ENCODE measurements at regions of chr2 and their contacts with region 1.

Region 1: DNA sequence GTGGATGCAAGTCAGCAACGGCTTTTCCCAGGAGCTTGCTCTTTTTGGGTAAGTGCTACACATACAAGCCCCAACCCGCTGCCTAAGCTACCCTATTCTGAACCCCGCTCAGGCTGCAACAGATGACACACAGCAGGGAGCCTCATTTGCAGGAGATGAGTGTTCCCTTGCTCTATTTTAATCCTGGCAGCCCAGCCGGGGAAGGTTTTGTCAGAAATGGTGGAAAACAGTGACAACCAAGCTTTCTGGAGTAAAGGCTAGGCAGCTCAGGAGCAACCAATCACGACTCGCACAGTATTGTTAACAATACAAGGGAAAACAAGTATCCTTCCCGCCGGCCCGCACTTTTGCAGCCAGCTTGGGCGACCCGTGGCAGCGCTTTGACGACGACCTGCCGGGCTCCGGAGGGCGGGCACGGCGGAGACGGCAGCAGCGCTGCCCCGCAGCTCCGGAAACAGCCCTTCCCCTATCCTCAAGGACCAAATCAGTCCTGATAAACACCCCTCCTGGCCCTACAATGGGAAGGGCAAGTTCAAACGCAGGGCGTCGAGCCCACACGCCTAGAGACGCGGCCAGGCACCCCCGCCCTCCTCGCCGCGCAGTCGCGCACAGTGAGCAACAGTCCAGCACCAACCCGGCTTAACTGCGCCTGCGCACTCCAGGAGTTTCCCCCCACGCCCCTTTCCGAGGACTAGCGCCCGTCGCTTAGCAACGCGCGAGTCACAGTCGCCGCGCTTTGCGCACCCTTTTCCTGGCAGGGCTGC is 74.3 kb upstream of the TSPYL6 start:
- DNase-seq: peak; percentile 95 to 99 (median 97)
- ATAC-seq: peak; percentile 99
- H3K4me3 ChIP-seq: peak overlapping the region; percentile 43 to 45
- H3K27ac ChIP-seq: peak overlapping the region; percentile 86 to 87
- H3K4me1 ChIP-seq: peaks cover 4 to 19% of the 10 kb centered on the region in 2 donors
- H3K27me3 ChIP-seq: peaks cover 0 to 17% of the 10 kb centered on the region in 2 donors
- CTCF ChIP-seq: no peak

Region 2: DNA sequence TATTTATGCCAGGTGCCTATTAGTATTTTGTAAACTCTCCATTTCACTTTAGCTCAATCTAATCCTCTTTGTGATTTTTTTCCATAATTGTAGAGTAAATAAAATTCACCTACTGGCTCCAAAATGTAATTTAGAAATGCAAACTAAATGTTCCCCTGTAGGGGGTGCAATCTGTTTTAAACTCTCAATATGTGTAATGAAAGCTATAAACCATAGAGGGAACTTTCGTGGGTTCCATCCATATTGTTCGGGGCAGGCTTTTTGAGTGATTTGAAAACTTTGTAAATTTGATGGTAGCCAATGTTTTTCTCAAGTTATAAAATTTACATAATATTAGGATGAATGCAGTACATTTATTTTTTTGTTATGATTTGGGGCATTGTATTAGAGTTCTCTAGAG is 123.7 kb before region 1 on chr2:
- intact Hi-C with region 1: loop called in 1 of 2 experiments (anchors 10 kb)
- DNase-seq: no peak
- ATAC-seq: peak; percentile 70
- H3K4me3 ChIP-seq: no peak overlapping the region
- H3K27ac ChIP-seq: no peak overlapping the region
- H3K4me1 ChIP-seq: peaks cover 22 to 35% of the 10 kb centered on the region in 2 donors
- H3K27me3 ChIP-seq: no peaks in the 10 kb centered on the region
- CTCF ChIP-seq: peak; percentile 36 to 56

Region 3: GRCh38 chr2:54613794-54614257 is 283.5 kb after region 1 on chr2:
- intact Hi-C with region 1: no loop called
- DNase-seq: no peak
- ATAC-seq: peak; percentile 50
- H3K4me3 ChIP-seq: no peak overlapping the region
- H3K27ac ChIP-seq: peak overlapping the region; percentile 2 to 7
- H3K4me1 ChIP-seq: peaks cover 8 to 76% of the 10 kb centered on the region in 2 donors
- H3K27me3 ChIP-seq: no peaks in the 10 kb centered on the region
- CTCF ChIP-seq: no peak

Measured in left lung (tissue), 14 donors.